ENCODE measurements at regions of chr10 and their contacts with region 1.

Region 1: DNA sequence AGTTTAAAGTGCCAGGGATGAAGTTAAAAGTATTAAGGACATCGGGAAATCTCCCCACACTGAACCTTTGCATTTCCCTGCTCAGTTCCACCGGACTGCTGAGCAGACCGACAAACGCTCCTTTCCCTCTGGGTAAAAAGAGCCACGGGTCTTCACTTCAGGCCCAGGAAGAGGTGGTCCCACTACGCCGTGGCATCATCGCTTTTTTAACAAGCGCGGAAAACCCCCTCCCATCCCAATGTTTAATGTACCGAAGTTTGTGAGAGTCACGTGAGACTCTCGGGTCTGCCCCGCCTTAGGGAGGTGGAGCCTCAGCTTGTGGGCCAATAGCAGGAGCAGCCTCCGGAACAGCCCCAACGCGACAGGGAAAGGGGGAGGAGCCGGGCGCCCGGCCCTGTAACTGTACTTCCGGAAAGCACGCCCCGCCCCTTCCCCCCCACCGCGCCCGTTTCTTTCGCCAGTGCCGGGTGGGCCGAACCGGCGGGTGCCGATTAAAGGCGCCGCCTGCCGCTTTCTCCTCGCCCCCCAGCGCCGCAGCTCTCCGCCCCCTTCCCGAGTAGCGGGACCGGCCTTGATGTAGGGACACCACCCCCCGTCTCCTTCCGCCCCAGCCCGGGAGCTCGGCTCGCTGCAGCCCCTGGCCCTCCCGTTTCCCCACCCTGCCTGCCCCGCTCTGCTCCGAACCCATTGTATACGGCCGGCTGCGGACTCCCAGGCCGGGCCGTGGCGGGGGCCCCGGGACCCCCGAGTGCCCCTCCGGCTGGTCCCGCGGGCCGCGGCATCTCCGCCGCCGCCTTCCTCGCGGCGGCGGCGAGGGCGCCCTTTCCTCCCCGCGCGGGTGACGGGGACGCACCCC is 2.2 kb upstream of the TRIM8 start:
- DNase-seq: peak; percentile 99 to 100
- ATAC-seq: peak; percentile 87
- H3K4me3 ChIP-seq: peak overlapping the region; percentile 88
- H3K27ac ChIP-seq: peak overlapping the region; percentile 83 to 95
- H3K4me1 ChIP-seq: peaks cover 0 to 1% of the 10 kb centered on the region in 2 donors
- H3K27me3 ChIP-seq: no peaks in the 10 kb centered on the region

Region 2: GRCh38 chr10:102503281-102504220 is 138.6 kb before region 1 on chr10 and contains the start of gene SUFU:
- intact Hi-C with region 1: loop called in 1 of 2 experiments (anchors 2 kb)
- DNase-seq: peak; percentile 97 to 98
- ATAC-seq: peak; percentile 93
- H3K4me3 ChIP-seq: peak within 1 kb of the TSS; percentile 75 to 86
- H3K27ac ChIP-seq: peak within 1 kb of the TSS in 1 of 2 donors; percentile 32
- H3K4me1 ChIP-seq: peaks cover 0 to 3% of the 10 kb centered on the region in 2 donors
- H3K27me3 ChIP-seq: no peaks in the 10 kb centered on the region
- total RNA-seq, gene SUFU: 11.3 to 24.0 TPM

Region 3: DNA sequence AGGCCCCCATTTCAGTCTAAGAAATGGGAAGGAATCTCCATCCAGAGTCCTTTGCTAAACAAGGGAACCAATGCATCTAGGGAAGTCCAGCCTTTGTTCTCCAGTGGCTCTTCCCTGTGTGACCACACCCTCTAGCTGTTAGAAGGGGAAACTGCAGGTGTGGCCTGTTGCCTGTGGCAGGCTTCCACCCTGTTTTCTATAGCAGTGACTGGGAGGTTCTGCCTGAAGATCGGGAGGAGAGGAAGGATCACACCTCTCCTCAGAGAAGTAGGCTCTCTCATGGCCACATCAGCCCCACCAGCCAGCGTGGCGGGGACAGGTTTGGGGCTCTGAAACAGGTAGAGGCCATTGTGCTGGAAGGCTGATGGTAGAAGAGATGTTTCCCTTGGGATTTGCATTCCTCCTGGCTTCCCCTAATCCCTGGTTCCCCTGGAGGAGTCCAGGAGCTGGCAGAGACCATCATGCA is 45.6 kb before region 1 on chr10:
- intact Hi-C with region 1: loop called in 1 of 2 experiments (anchors 5 kb)
- DNase-seq: no peak
- ATAC-seq: no peak
- H3K4me3 ChIP-seq: no peak overlapping the region
- H3K27ac ChIP-seq: no peak overlapping the region
- H3K4me1 ChIP-seq: no peaks in the 10 kb centered on the region
- H3K27me3 ChIP-seq: no peaks in the 10 kb centered on the region

Region 4: DNA sequence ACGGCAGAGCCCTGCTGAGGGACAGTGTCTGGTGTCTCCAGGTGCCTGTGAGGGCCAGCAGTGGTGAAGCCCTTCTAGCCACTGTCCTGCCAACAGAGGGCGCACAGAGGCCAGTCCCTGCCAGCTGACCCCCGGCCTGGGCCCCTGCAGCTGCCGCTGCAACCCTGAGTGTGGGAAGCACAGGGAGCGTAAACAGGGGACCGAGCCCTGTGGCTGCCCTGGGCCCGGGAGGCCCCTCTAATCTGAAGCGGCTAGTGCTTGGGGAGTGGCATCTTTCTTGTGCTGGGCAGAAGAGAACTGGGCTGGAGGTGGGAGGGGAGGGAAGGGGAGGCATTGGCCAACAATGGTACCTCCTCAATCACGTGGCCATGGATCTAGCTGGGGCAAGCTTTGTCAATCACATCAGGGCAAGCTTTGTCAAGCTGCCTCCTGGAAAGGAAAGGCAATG is 36.8 kb after region 1 on chr10:
- intact Hi-C with region 1: loop called in 1 of 2 experiments (anchors 2 kb)
- DNase-seq: peak; percentile 82 to 86
- ATAC-seq: peak; percentile 49
- H3K4me3 ChIP-seq: no peak overlapping the region
- H3K27ac ChIP-seq: no peak overlapping the region
- H3K4me1 ChIP-seq: peaks cover 0 to 3% of the 10 kb centered on the region in 2 donors
- H3K27me3 ChIP-seq: no peaks in the 10 kb centered on the region

Region 5: GRCh38 chr10:102713814-102714620 is 71.9 kb after region 1 on chr10 and contains the start of gene ARL3:
- intact Hi-C with region 1: loop called (anchors 5 kb)
- DNase-seq: peak; percentile 99
- ATAC-seq: peak; percentile 99
- H3K4me3 ChIP-seq: peak within 1 kb of the TSS; percentile 48 to 69
- H3K27ac ChIP-seq: peak within 1 kb of the TSS in 1 of 2 donors; percentile 11
- H3K4me1 ChIP-seq: no peaks in the 10 kb centered on the region
- H3K27me3 ChIP-seq: no peaks in the 10 kb centered on the region
- total RNA-seq, gene ARL3: 8.2 to 8.6 TPM

Measured in aorta (tissue), 5 donors.